ENCODE measurements at regions of chr1 and their contacts with region 1.

Region 1: DNA sequence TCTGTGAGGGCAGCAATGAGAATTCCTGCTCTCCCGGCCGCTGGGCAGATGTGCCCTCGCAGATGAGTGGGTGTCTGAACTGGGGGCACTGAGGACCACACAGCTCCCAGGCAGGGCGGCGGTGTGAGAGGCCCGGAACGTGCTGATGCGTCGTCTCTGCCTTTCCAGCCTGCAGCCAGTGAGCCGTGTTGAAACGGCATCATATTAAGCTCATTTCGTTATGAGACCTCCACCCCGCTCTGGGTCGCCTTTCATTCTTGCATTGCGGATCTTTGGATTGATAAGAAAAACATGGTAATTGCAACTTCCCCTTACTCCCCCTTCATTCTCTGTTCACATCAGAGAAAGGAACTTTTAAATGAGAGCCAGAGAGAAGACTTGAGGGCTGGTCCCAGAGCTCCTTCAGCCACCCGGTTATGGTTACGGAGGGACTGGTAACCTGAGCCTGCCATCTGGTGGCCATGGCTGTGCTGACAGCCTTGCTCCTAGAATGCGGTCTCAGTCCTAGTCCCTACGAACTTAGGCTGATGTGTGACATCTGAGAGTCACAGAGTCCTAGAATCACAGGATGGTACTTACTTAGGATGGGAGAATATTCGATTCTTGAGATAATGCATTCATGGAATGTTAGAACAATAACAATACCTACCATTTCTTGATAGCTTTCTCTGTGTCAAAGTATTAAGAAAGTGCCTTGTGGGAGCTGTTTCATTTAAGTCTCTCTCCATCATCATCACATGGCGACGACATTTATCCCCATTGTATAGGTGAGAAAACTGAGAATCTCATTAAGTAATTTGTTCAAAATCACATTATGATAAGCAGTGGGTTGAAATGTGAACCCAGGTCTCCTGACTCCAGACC is 271.0 kb downstream of the TRABD2B start:
- DNase-seq: peak; percentile 83
- H3K4me3 Mint-ChIP-seq: peak overlapping the region; percentile 30
- H3K27ac Mint-ChIP-seq: no peak overlapping the region
- H3K4me1 Mint-ChIP-seq: peaks cover 7% of the 10 kb centered on the region
- H3K27me3 Mint-ChIP-seq: peaks cover 30% of the 10 kb centered on the region

Region 2: GRCh38 chr1:47179017-47179987 is 546.9 kb before region 1 on chr1:
- CTCF ChIA-PET with region 1: interaction called, 14 read pairs
- intact Hi-C with region 1: loop called (anchors 5 kb)
- DNase-seq: peak; percentile 90
- H3K4me3 Mint-ChIP-seq: peak overlapping the region; percentile 79
- H3K27ac Mint-ChIP-seq: no peak overlapping the region
- H3K4me1 Mint-ChIP-seq: peaks cover 10% of the 10 kb centered on the region
- H3K27me3 Mint-ChIP-seq: peaks cover 34% of the 10 kb centered on the region

Region 3: GRCh38 chr1:47388891-47389238 is 337.4 kb before region 1 on chr1:
- CTCF ChIA-PET with region 1: interaction called, 10 read pairs
- intact Hi-C with region 1: loop called (anchors 1 kb)
- DNase-seq: peak; percentile 70
- H3K4me3 Mint-ChIP-seq: no peak overlapping the region
- H3K27ac Mint-ChIP-seq: no peak overlapping the region
- H3K4me1 Mint-ChIP-seq: no peaks in the 10 kb centered on the region
- H3K27me3 Mint-ChIP-seq: peaks cover 7% of the 10 kb centered on the region

Region 4: GRCh38 chr1:47432071-47433036 is 293.9 kb before region 1 on chr1:
- CTCF ChIA-PET with region 1: interaction called, 34 read pairs
- intact Hi-C with region 1: loop called (anchors 1 kb)
- DNase-seq: peak; percentile 82
- H3K4me3 Mint-ChIP-seq: peak overlapping the region; percentile 26
- H3K27ac Mint-ChIP-seq: no peak overlapping the region
- H3K4me1 Mint-ChIP-seq: peaks cover 33% of the 10 kb centered on the region
- H3K27me3 Mint-ChIP-seq: peaks cover 64% of the 10 kb centered on the region

Region 5: DNA sequence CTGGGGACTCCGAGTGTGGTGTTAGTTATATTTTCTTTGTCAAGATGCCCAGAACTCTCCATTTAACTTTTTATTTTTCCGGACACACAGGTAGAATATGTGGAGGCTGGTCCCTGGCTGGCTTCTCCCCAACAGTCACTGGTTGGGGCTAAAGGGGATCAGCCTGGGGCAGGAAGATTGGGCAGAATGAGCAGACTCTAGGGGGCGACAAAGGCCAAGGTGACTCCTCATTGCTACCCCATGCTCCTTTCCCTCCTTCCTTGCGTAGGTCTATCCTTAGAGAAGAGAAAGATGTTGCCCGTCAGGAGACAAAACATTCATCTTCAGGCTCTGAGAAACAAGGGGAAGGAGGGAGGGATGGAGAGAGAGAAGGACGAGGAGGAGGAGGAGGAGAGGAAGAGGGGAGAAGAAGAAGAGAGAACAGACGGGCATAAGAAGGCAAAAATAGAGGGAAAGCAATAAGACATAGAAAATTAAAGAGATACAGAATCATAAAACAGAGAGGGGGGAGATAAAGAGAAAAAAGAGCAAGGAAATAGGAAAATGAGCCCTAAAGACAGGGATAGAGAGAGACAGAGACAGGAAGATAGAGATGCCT is 198.5 kb before region 1 on chr1:
- CTCF ChIA-PET with region 1: interaction called, 6 read pairs
- intact Hi-C with region 1: loop called (anchors 5 kb)
- DNase-seq: peak; percentile 16
- H3K4me3 Mint-ChIP-seq: no peak overlapping the region
- H3K27ac Mint-ChIP-seq: no peak overlapping the region
- H3K4me1 Mint-ChIP-seq: no peaks in the 10 kb centered on the region
- H3K27me3 Mint-ChIP-seq: peaks cover 66% of the 10 kb centered on the region

Region 6: GRCh38 chr1:47692196-47692595 is 34.0 kb before region 1 on chr1:
- CTCF ChIA-PET with region 1: no interaction called
- intact Hi-C with region 1: no loop called
- DNase-seq: no peak
- H3K4me3 Mint-ChIP-seq: no peak overlapping the region
- H3K27ac Mint-ChIP-seq: no peak overlapping the region
- H3K4me1 Mint-ChIP-seq: no peaks in the 10 kb centered on the region
- H3K27me3 Mint-ChIP-seq: peaks cover 12% of the 10 kb centered on the region

Region 7: GRCh38 chr1:47710329-47711071 is 15.7 kb before region 1 on chr1:
- CTCF ChIA-PET with region 1: interaction called, 32 read pairs
- intact Hi-C with region 1: no loop called
- DNase-seq: peak; percentile 68
- H3K4me3 Mint-ChIP-seq: no peak overlapping the region
- H3K27ac Mint-ChIP-seq: no peak overlapping the region
- H3K4me1 Mint-ChIP-seq: peaks cover 3% of the 10 kb centered on the region
- H3K27me3 Mint-ChIP-seq: peaks cover 71% of the 10 kb centered on the region

Measured in activated naive CD4-positive, alpha-beta T cell treated with anti-CD3 and anti-CD28 coated beads for 36 hours (primary cell).